Panc1 (cell line): ENCODE measurements at regions of chr7 and their contacts with region 1.

Region 1: DNA sequence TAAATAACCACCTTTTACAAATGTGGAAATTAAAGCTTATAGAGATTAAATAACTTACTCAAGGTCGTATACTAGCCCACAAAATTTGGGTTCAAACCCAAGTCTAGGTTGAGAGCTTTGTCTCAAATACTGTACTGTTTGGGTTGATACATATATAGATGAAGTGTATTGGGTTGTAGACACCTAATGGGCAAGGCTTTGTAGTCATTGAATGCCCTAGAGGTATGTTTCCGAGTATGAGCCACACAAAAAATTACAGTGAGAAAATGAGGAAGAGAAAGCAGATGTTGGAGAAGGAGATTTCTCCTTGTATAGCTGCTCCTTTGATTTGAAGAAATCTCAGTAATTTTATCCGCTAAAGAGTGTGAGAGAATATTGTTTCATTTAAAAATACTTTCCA is 60.6 kb downstream of the C1GALT1 start:
- DNase-seq: no peak
- ATAC-seq: no peak
- H3K4me3 ChIP-seq: no peak overlapping the region
- H3K27ac ChIP-seq: no peak overlapping the region
- H3K4me1 ChIP-seq: no peaks in the 10 kb centered on the region
- H3K27me3 ChIP-seq: no peaks in the 10 kb centered on the region
- CTCF ChIP-seq: no peak

Region 2: GRCh38 chr7:5854738-5855137 is 1388.2 kb before region 1 on chr7:
- CTCF ChIA-PET with region 1: interaction called, 10 read pairs
- POLR2A ChIA-PET with region 1: no interaction called
- in situ Hi-C with region 1: no loop called
- intact Hi-C with region 1: no loop called
- DNase-seq: no peak
- ATAC-seq: no peak
- H3K4me3 ChIP-seq: no peak overlapping the region
- H3K27ac ChIP-seq: no peak overlapping the region
- H3K4me1 ChIP-seq: no peaks in the 10 kb centered on the region
- H3K27me3 ChIP-seq: no peaks in the 10 kb centered on the region
- CTCF ChIP-seq: no peak

Region 3: GRCh38 chr7:6729492-6730342 is 513.2 kb before region 1 on chr7:
- CTCF ChIA-PET with region 1: no interaction called
- POLR2A ChIA-PET with region 1: no interaction called
- in situ Hi-C with region 1: no loop called
- intact Hi-C with region 1: no loop called
- DNase-seq: peak; percentile 64
- ATAC-seq: peak; percentile 100
- H3K4me3 ChIP-seq: peak overlapping the region; percentile 72 to 86
- H3K27ac ChIP-seq: peak overlapping the region; percentile 95
- H3K4me1 ChIP-seq: peaks cover 3% of the 10 kb centered on the region; the same call in 1 of the 2 replicates
- H3K27me3 ChIP-seq: no peaks in the 10 kb centered on the region
- CTCF ChIP-seq: no peak